ENCODE measurements at regions of chr20 and their contacts with region 1.

Region 1: GRCh38 chr20:4038047-4038459 is 22.7 kb upstream of the RNF24 start:
- DNase-seq: peak; percentile 52
- ATAC-seq: peak; percentile 100
- H3K4me3 Mint-ChIP-seq: peak overlapping the region; percentile 82
- H3K27ac Mint-ChIP-seq: peak overlapping the region; percentile 96
- H3K4me1 Mint-ChIP-seq: peaks cover 16% of the 10 kb centered on the region
- H3K27me3 Mint-ChIP-seq: no peaks in the 10 kb centered on the region
- CTCF ChIP-seq: no peak

Region 2: DNA sequence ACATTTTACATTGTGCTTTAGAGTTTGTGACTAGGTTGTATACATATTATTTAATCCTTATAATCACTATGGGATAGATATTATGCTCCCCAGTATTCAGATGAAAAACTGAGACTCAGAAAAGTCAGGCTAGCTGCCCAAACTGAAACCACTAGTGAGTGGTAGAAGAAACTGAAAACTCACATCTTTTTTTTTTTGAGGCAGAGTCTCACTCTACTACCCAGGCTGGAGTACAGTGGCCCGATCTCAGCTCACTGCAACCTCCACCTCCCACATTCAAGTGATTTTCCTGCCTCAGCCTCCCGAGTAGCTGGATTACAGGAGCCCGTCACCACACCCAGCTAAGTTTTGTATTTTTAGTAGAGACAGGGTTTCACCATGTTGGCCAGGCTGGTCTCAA is 44.9 kb before region 1 on chr20:
- CTCF ChIA-PET with region 1: no interaction called
- POLR2A ChIA-PET with region 1: no interaction called
- intact Hi-C with region 1: loop called (anchors 2 kb)
- DNase-seq: no peak
- ATAC-seq: no peak
- H3K4me3 Mint-ChIP-seq: no peak overlapping the region
- H3K27ac Mint-ChIP-seq: no peak overlapping the region
- H3K4me1 Mint-ChIP-seq: peaks cover 6% of the 10 kb centered on the region
- H3K27me3 Mint-ChIP-seq: no peaks in the 10 kb centered on the region
- CTCF ChIP-seq: no peak

Region 3: DNA sequence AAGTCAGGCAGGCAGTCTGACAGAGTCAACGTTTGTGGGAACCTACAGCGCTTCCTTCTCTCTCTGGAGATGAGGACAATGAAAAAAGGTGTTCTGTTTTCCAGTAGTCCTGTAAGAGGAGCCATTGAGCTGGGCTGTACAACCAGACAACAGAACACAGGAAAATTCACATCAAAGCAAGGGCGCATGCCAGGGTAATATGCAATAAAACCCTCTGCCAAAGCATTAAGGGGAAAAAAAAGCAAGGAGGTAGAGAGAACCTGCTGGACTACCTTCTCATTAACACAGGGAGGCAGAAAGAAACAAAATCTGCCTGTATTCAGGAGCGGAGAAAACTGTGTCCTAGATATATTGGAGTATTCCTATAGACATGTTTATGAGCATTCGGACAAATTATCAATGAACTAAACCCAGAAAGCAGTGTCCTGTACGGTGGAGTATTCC is 24.0 kb before region 1 on chr20:
- CTCF ChIA-PET with region 1: no interaction called
- POLR2A ChIA-PET with region 1: interaction called, 10 read pairs
- intact Hi-C with region 1: loop called (anchors 2 kb)
- DNase-seq: no peak
- ATAC-seq: no peak
- H3K4me3 Mint-ChIP-seq: peak overlapping the region; percentile 83
- H3K27ac Mint-ChIP-seq: no peak overlapping the region
- H3K4me1 Mint-ChIP-seq: peaks cover 33% of the 10 kb centered on the region
- H3K27me3 Mint-ChIP-seq: peaks cover 2% of the 10 kb centered on the region
- CTCF ChIP-seq: no peak

Region 4: DNA sequence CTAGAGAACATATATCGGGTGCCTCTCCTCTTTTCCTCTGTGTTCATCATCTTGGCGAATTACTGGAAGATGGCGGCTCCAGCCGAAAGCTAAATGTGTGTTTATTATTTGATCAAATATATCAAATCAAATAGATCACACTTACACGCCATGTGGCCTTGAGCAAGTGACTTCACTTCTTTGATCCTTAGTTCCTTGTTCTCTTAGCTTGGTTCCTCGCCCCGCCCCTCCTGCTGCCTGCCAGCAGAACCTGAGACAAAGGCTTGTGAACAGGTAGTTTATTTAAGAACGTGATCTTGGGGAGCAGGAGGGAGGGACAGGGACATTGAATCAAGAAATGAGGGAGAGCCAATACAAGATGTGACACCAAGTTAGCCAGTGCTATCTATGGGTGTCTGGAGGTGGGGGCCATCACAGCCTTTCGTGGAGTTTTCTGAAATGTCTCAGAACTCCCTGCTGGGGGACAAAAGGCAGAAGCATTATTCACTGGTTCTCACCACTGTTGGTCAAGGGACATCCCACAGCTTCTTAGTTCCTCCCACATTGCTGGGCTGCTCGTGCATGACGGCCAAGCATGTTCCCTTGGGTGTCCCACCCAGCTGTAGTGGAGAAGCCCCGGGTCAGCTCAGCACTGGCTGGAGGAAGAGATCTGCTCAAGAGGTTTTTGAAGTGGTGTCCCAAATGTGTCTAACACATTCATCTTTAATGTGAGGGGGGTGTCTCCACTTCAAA is 22.2 kb after region 1 on chr20:
- CTCF ChIA-PET with region 1: no interaction called
- POLR2A ChIA-PET with region 1: no interaction called
- intact Hi-C with region 1: no loop called
- DNase-seq: no peak
- ATAC-seq: no peak
- H3K4me3 Mint-ChIP-seq: no peak overlapping the region
- H3K27ac Mint-ChIP-seq: no peak overlapping the region
- H3K4me1 Mint-ChIP-seq: peaks cover 7% of the 10 kb centered on the region
- H3K27me3 Mint-ChIP-seq: peaks cover 4% of the 10 kb centered on the region
- CTCF ChIP-seq: no peak